ENCODE measurements at regions of chr7 and their contacts with region 1.

Region 1: GRCh38 chr7:25496476-25497368 is 268.4 kb upstream of the NPVF start:
- DNase-seq: no peak
- ATAC-seq: peak; percentile 88
- H3K4me3 Mint-ChIP-seq: peak overlapping the region; percentile 86
- H3K27ac Mint-ChIP-seq: peak overlapping the region; percentile 89
- H3K4me1 Mint-ChIP-seq: peaks cover 23% of the 10 kb centered on the region
- H3K27me3 Mint-ChIP-seq: peaks cover 3% of the 10 kb centered on the region
- CTCF ChIP-seq: no peak

Region 2: GRCh38 chr7:25454562-25455041 is 42.1 kb before region 1 on chr7:
- CTCF ChIA-PET with region 1: no interaction called
- POLR2A ChIA-PET with region 1: no interaction called
- intact Hi-C with region 1: no loop called
- DNase-seq: no peak
- ATAC-seq: no peak
- H3K4me3 Mint-ChIP-seq: no peak overlapping the region
- H3K27ac Mint-ChIP-seq: no peak overlapping the region
- H3K4me1 Mint-ChIP-seq: no peaks in the 10 kb centered on the region
- H3K27me3 Mint-ChIP-seq: peaks cover 1% of the 10 kb centered on the region
- CTCF ChIP-seq: no peak

Region 3: DNA sequence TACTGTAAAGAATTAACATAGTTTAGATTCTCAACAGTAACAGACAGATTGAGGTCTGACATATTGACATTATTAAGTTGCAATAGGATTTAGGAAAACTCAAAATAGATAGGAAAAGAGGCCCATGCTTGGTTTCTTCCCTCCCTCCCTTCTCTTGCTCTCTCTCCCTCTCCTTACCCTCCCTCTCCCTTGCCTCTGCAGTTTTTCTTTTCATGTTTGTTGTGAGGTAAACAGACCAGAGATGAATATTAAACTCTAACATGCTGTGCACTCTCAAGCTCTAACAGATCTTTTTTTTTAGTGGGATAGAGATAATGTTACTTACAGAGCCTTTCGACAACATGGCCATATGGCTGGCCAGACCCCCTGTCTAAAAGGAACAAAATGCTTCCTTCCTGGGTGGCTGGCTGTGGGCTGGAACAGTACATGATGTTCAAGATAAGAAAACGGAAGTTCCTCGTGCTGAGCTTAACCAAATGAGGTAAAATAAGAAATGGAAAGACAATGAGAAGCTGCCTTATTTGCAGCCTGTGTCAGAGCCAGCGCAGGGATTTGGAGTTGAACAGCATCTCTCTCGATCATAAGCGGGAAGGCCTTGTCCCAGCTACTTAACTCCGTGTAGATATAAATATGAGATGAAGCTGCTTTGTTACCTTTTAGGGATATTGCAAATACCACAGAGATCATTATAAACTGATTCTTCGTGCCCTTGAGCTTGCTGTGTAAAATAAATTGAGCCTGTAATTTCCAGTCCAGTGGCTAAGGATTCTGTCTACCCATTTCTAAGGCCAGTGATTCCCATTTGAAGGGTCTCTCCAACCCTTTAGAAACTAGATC is 123.5 kb after region 1 on chr7:
- CTCF ChIA-PET with region 1: no interaction called
- POLR2A ChIA-PET with region 1: no interaction called
- intact Hi-C with region 1: loop called (anchors 10 kb)
- DNase-seq: no peak
- ATAC-seq: peak; percentile 87
- H3K4me3 Mint-ChIP-seq: peak overlapping the region; percentile 70
- H3K27ac Mint-ChIP-seq: peak overlapping the region; percentile 89
- H3K4me1 Mint-ChIP-seq: peaks cover 74% of the 10 kb centered on the region
- H3K27me3 Mint-ChIP-seq: no peaks in the 10 kb centered on the region
- CTCF ChIP-seq: no peak